IMR-90 (cell line): ENCODE measurements at regions of chr3 and their contacts with region 1.

Region 1: GRCh38 chr3:30779686-30780287 is 114.7 kb downstream of the GADL1 start:
- DNase-seq: peak; percentile 38
- ATAC-seq: peak; percentile 83
- H3K4me3 ChIP-seq: no peak overlapping the region
- H3K27ac ChIP-seq: no peak overlapping the region
- H3K4me1 ChIP-seq: no peaks in the 10 kb centered on the region
- H3K27me3 ChIP-seq: peaks cover 12% of the 10 kb centered on the region
- CTCF ChIP-seq: peak; percentile 60
- POLR2A ChIP-seq: no peak
- RAD21 ChIP-seq: peak; percentile 73

Region 2: GRCh38 chr3:30996467-30997052 is 216.8 kb after region 1 on chr3:
- CTCF ChIA-PET with region 1: no interaction called
- POLR2A ChIA-PET with region 1: no interaction called
- dilution Hi-C with region 1: no loop called
- in situ Hi-C with region 1: no loop called
- intact Hi-C with region 1: no loop called
- DNase-seq: no peak
- ATAC-seq: no peak
- H3K4me3 ChIP-seq: no peak overlapping the region
- H3K27ac ChIP-seq: no peak overlapping the region
- H3K4me1 ChIP-seq: no peaks in the 10 kb centered on the region
- H3K27me3 ChIP-seq: no peaks in the 10 kb centered on the region; the same call in 1 of the 2 replicates
- CTCF ChIP-seq: no peak
- POLR2A ChIP-seq: no peak
- RAD21 ChIP-seq: no peak

Region 3: GRCh38 chr3:31762097-31762764 is 982.4 kb after region 1 on chr3:
- CTCF ChIA-PET with region 1: no interaction called
- POLR2A ChIA-PET with region 1: no interaction called
- dilution Hi-C with region 1: no loop called
- in situ Hi-C with region 1: loop called (anchors 25 kb)
- intact Hi-C with region 1: loop called (anchors 5 kb)
- DNase-seq: no peak
- ATAC-seq: no peak
- H3K4me3 ChIP-seq: no peak overlapping the region
- H3K27ac ChIP-seq: no peak overlapping the region
- H3K4me1 ChIP-seq: peaks cover 2% of the 10 kb centered on the region; the same call in 1 of the 2 replicates
- H3K27me3 ChIP-seq: no peaks in the 10 kb centered on the region
- CTCF ChIP-seq: no peak
- POLR2A ChIP-seq: no peak
- RAD21 ChIP-seq: no peak